ENCODE measurements at regions of chr14 and their contacts with region 1.

Region 1: GRCh38 chr14:21860172-21860571 is 186.6 kb upstream of the OR4E1 start:
- DNase-seq: peak; percentile 65
- ATAC-seq: peak; percentile 35
- H3K4me3 Mint-ChIP-seq: peak overlapping the region; percentile 62
- H3K27ac Mint-ChIP-seq: peak overlapping the region; percentile 57
- H3K4me1 Mint-ChIP-seq: peaks cover 4% of the 10 kb centered on the region
- H3K27me3 Mint-ChIP-seq: peaks cover 5% of the 10 kb centered on the region
- CTCF ChIP-seq: peak; percentile 69

Region 2: GRCh38 chr14:21579976-21580375 is 280.2 kb before region 1 on chr14 and contains the start of gene OR10G3:
- CTCF ChIA-PET with region 1: no interaction called
- POLR2A ChIA-PET with region 1: no interaction called
- intact Hi-C with region 1: no loop called
- DNase-seq: no peak
- ATAC-seq: no peak
- H3K4me3 Mint-ChIP-seq: no peak within 1 kb of the TSS
- H3K27ac Mint-ChIP-seq: no peak within 1 kb of the TSS
- H3K4me1 Mint-ChIP-seq: no peaks in the 10 kb centered on the region
- H3K27me3 Mint-ChIP-seq: peaks cover 8% of the 10 kb centered on the region
- CTCF ChIP-seq: no peak
- total RNA-seq, gene OR10G3: not detected

Region 3: DNA sequence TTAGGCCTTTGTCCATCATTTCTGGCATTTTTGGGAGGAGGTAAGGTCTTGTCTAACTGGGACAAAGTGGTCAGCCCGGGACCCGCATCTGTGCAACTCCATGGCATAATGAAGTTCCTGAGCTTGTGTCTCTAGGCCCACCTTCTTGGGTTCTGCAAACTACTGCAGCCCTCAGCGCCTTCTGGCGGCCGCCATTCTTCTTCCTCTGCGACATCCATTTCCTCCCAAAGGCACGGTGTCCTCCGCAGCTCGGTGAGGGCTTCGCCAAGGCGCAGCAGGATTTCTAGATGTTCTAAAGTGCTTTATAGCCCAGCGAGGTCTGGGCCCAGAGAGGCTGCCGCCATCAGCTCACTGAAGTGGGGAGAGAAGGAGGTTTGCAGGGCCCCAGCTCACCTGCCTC is 52.2 kb before region 1 on chr14:
- CTCF ChIA-PET with region 1: no interaction called
- POLR2A ChIA-PET with region 1: no interaction called
- intact Hi-C with region 1: no loop called
- DNase-seq: no peak
- ATAC-seq: no peak
- H3K4me3 Mint-ChIP-seq: no peak overlapping the region
- H3K27ac Mint-ChIP-seq: no peak overlapping the region
- H3K4me1 Mint-ChIP-seq: no peaks in the 10 kb centered on the region
- H3K27me3 Mint-ChIP-seq: peaks cover 15% of the 10 kb centered on the region
- CTCF ChIP-seq: no peak

Region 4: GRCh38 chr14:21846227-21846885 is 13.8 kb before region 1 on chr14:
- CTCF ChIA-PET with region 1: interaction called, 57 read pairs
- POLR2A ChIA-PET with region 1: interaction called, 26 read pairs
- intact Hi-C with region 1: no loop called
- DNase-seq: peak; percentile 82
- ATAC-seq: peak; percentile 90
- H3K4me3 Mint-ChIP-seq: peak overlapping the region; percentile 79
- H3K27ac Mint-ChIP-seq: peak overlapping the region; percentile 79
- H3K4me1 Mint-ChIP-seq: peaks cover 4% of the 10 kb centered on the region
- H3K27me3 Mint-ChIP-seq: peaks cover 21% of the 10 kb centered on the region
- CTCF ChIP-seq: peak; percentile 84

Measured in activated CD8-positive, alpha-beta T cell treated with anti-CD3 and anti-CD28 coated beads for 36 hours (primary cell).